GM12878 (cell line): ENCODE measurements at regions of chr17 and their contacts with region 1.

Region 1: DNA sequence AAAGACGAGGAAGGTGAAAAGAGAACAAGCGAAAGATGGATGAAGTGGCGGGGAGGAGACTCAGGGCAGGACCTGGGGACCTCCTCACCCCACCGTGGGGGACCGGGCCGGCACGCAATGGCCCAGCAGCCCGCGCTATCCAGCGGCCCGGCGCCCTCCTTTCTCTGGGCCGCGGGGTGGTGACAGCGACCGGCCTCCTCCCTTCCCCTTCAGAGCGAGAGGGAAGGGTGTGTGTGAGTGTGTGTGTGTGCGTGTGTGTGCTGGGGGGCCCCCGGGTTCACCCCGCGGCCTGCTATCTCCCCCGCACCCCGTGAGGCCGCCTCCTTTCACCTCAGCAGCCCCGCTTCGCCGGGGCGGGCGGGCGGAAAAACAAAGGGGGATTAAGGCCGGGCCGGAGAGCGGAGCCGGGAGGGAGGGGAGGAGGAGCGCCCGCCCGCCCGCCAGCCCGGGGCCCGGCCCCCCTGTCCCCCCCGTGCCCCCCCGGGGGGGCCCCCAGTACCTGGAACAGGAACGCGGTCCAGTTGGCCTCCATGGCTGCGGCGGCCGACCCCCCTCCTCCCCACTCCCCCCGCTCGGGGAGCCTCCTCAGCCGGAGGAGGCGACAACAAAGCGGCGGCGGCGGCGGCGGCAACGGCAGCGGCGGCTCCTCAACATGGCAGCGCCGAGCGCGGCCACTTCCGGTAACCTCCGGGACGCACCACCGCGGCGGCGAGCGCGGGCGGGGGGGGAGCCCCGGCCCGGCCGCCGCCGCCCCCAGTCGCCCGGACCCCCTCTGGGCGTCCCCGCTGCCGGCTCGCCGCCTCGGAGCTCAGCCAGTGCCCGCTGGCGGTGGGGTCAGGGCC is at the start of gene VEZF1:
- DNase-seq: no peak
- ATAC-seq: peak; percentile 73
- H3K4me3 ChIP-seq: peak within 1 kb of the TSS; percentile 87
- H3K27ac ChIP-seq: peak within 1 kb of the TSS; percentile 56
- H3K4me1 ChIP-seq: peaks cover 5% of the 10 kb centered on the region
- H3K27me3 ChIP-seq: no peaks in the 10 kb centered on the region
- CTCF ChIP-seq: no peak
- EP300 ChIP-seq: no peak
- POLR2A ChIP-seq: peak; percentile 13; the same call in 1 of the 2 replicates
- RAD21 ChIP-seq: no peak
- polyA plus RNA-seq, gene VEZF1: 9.5 to 11.7 TPM

Region 2: DNA sequence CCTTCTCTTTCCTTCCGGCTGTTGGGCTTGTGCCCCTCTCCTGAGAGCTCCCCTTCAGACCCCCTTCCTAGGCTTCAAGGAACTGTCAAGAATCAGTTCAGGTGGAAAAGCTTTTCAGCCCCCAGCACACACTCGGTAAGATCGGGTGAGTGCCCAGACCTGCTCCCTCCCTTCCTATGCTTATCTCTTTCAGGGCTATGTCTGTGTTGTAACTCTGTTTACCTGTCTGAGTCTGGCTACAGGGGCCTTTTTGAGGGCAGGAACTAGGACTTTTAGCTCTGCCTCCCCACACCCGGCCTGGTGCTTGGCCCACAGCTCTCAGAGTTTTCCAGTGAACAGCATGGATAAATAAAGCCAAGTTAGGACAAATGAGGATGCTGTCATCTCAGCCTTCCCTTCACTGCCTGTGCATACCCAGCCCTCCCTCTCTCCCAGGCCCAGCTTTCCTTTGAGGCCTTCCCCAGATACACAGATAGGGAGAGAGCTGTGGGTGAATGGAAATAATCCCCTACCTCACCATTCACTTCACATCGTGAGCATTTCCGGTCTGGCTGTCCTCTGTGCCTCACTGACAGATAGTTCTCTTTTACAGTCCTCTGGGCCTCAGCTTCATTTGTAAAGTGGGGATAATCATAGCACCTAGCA is 132.3 kb before region 1 on chr17:
- CTCF ChIA-PET with region 1: interaction called, 708 read pairs
- POLR2A ChIA-PET with region 1: interaction called, 10 read pairs
- RAD21 ChIA-PET with region 1: interaction called, 239 read pairs
- SMC1A ChIA-PET with region 1: interaction called, 341 read pairs
- in situ Hi-C with region 1: no loop called
- intact Hi-C with region 1: no loop called
- DNase-seq: no peak
- ATAC-seq: no peak
- H3K4me3 ChIP-seq: no peak overlapping the region
- H3K27ac ChIP-seq: no peak overlapping the region
- H3K4me1 ChIP-seq: no peaks in the 10 kb centered on the region
- H3K27me3 ChIP-seq: no peaks in the 10 kb centered on the region; a peak in 1 of 4 replicates
- CTCF ChIP-seq: no peak
- EP300 ChIP-seq: no peak
- POLR2A ChIP-seq: no peak
- RAD21 ChIP-seq: no peak

Region 3: GRCh38 chr17:57892146-57892828 is 95.5 kb before region 1 on chr17:
- CTCF ChIA-PET with region 1: interaction called, 89 read pairs
- POLR2A ChIA-PET with region 1: no interaction called
- RAD21 ChIA-PET with region 1: interaction called, 13 read pairs
- SMC1A ChIA-PET with region 1: interaction called, 27 read pairs
- in situ Hi-C with region 1: loop called (anchors 10 kb)
- intact Hi-C with region 1: no loop called
- DNase-seq: no peak
- ATAC-seq: peak; percentile 91
- H3K4me3 ChIP-seq: no peak overlapping the region
- H3K27ac ChIP-seq: no peak overlapping the region
- H3K4me1 ChIP-seq: peaks cover 19% of the 10 kb centered on the region
- H3K27me3 ChIP-seq: no peaks in the 10 kb centered on the region
- CTCF ChIP-seq: peak; percentile 91 to 99 (median 99)
- EP300 ChIP-seq: no peak
- POLR2A ChIP-seq: no peak
- RAD21 ChIP-seq: peak; percentile 88

Region 4: DNA sequence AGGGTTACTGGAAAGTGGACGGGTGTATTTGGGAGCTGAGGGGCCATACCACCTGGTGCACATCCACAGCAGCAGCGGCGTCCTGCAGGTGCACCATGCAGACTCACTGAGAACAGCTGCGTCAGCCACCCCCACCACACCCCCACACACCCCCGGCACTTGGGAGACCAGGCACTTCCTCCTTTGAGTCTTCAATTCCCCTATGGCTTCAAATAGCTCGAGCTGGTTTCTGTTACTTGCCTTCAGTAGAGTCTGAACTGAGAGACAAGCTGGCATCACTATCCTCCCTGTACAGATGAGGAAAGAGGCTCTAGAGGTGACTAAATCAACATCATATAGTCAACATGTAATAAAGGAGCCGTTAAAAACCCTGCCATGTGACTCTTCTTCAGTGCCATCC is 48.0 kb before region 1 on chr17:
- CTCF ChIA-PET with region 1: interaction called, 5 read pairs
- POLR2A ChIA-PET with region 1: interaction called, 11 read pairs
- RAD21 ChIA-PET with region 1: interaction called, 23 read pairs
- SMC1A ChIA-PET with region 1: interaction called, 114 read pairs
- in situ Hi-C with region 1: no loop called
- intact Hi-C with region 1: no loop called
- DNase-seq: peak; percentile 75
- ATAC-seq: peak; percentile 87
- H3K4me3 ChIP-seq: no peak overlapping the region; the same call in 1 of the 2 replicates
- H3K27ac ChIP-seq: no peak overlapping the region
- H3K4me1 ChIP-seq: peaks cover 45% of the 10 kb centered on the region
- H3K27me3 ChIP-seq: no peaks in the 10 kb centered on the region
- CTCF ChIP-seq: no peak
- EP300 ChIP-seq: peak; percentile 66; a peak in 2 of 4 replicates
- POLR2A ChIP-seq: no peak
- RAD21 ChIP-seq: no peak

Region 5: DNA sequence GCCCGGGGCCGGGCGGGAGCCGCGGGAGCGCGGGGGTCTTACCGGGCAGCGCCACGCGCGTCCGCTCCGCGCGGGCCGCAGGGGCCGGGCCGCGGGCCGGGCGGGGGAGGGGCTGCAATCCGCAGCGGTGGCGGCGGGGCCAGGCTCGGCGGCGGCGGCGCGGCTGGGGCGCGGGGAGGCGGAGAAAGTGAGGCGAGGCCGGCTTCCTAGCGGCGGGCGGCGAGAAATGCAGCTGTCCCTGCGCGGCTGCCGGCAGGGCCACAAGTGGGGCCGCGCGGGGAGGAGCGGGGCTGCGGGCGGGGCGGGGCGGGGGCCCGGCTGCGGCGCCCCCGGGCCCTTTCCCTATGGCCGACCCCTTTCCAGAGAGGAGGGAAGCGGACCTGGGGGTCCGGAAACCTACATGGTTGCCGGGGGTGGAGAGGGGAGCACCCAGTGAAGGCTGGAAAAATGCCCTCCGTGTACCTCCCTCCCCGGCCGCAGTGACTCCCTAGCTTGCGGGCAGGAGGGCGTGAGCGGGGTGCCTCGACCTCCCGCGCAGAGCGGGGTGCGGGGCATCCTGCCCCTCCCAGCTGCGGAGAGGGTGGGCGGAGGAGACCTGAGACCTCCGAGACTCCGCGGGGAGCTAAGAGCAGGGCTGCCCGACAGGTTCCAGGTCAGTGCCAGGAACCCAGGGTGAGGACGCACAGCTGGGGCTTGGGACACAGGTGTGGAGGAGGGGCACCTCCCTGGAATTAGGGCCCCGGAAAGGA is 32.4 kb before region 1 on chr17 and contains the start of gene CUEDC1:
- CTCF ChIA-PET with region 1: interaction called, 22 read pairs
- POLR2A ChIA-PET with region 1: interaction called, 5 read pairs
- RAD21 ChIA-PET with region 1: interaction called, 55 read pairs
- SMC1A ChIA-PET with region 1: interaction called, 114 read pairs
- in situ Hi-C with region 1: no loop called
- intact Hi-C with region 1: no loop called
- DNase-seq: no peak
- ATAC-seq: peak; percentile 79
- H3K4me3 ChIP-seq: peak within 1 kb of the TSS; percentile 74
- H3K27ac ChIP-seq: no peak within 1 kb of the TSS
- H3K4me1 ChIP-seq: peaks cover 23% of the 10 kb centered on the region
- H3K27me3 ChIP-seq: peaks cover 0 to 2% of the 10 kb centered on the region in 2 experiments; a peak in 2 of 4 replicates
- CTCF ChIP-seq: peak in 2 of 3 experiments; percentile 27 to 29; a peak in 2 of 6 replicates
- EP300 ChIP-seq: no peak
- POLR2A ChIP-seq: no peak
- RAD21 ChIP-seq: no peak
- polyA plus RNA-seq, gene CUEDC1: 0.24 to 0.80 TPM

Region 6: GRCh38 chr17:58006924-58007780 is 19.4 kb after region 1 on chr17 and contains the start of gene SRSF1:
- CTCF ChIA-PET with region 1: interaction called, 195 read pairs
- POLR2A ChIA-PET with region 1: interaction called, 10 read pairs
- RAD21 ChIA-PET with region 1: interaction called, 25 read pairs
- SMC1A ChIA-PET with region 1: interaction called, 72 read pairs
- in situ Hi-C with region 1: no loop called
- intact Hi-C with region 1: no loop called
- DNase-seq: peak; percentile 97
- ATAC-seq: peak; percentile 91
- H3K4me3 ChIP-seq: peak within 1 kb of the TSS; percentile 98
- H3K27ac ChIP-seq: peak within 1 kb of the TSS; percentile 96
- H3K4me1 ChIP-seq: peaks cover 8% of the 10 kb centered on the region; the same call in 1 of the 2 replicates
- H3K27me3 ChIP-seq: no peaks in the 10 kb centered on the region
- CTCF ChIP-seq: no peak
- EP300 ChIP-seq: peak in 1 of 2 experiments; percentile 62; a peak in 2 of 4 replicates
- POLR2A ChIP-seq: peak; percentile 99
- RAD21 ChIP-seq: no peak
- polyA plus RNA-seq, gene SRSF1: 101 to 104 TPM

Region 7: GRCh38 chr17:58028578-58028977 is 40.8 kb after region 1 on chr17:
- CTCF ChIA-PET with region 1: no interaction called
- POLR2A ChIA-PET with region 1: no interaction called
- RAD21 ChIA-PET with region 1: no interaction called
- SMC1A ChIA-PET with region 1: no interaction called
- in situ Hi-C with region 1: no loop called
- intact Hi-C with region 1: no loop called
- DNase-seq: no peak
- ATAC-seq: no peak
- H3K4me3 ChIP-seq: no peak overlapping the region
- H3K27ac ChIP-seq: no peak overlapping the region
- H3K4me1 ChIP-seq: no peaks in the 10 kb centered on the region
- H3K27me3 ChIP-seq: no peaks in the 10 kb centered on the region; a peak in 1 of 4 replicates
- CTCF ChIP-seq: no peak
- EP300 ChIP-seq: no peak
- POLR2A ChIP-seq: no peak
- RAD21 ChIP-seq: no peak

Region 8: GRCh38 chr17:58039975-58040374 is 52.2 kb after region 1 on chr17:
- CTCF ChIA-PET with region 1: no interaction called
- POLR2A ChIA-PET with region 1: no interaction called
- RAD21 ChIA-PET with region 1: no interaction called
- SMC1A ChIA-PET with region 1: no interaction called
- in situ Hi-C with region 1: no loop called
- intact Hi-C with region 1: no loop called
- DNase-seq: no peak
- ATAC-seq: no peak
- H3K4me3 ChIP-seq: no peak overlapping the region
- H3K27ac ChIP-seq: no peak overlapping the region
- H3K4me1 ChIP-seq: no peaks in the 10 kb centered on the region
- H3K27me3 ChIP-seq: 0 out of 4 replicates have a peak, but pooled peaks cover 0 to 2% of the 10 kb centered on the region in 2 experiments
- CTCF ChIP-seq: no peak
- EP300 ChIP-seq: no peak
- POLR2A ChIP-seq: no peak
- RAD21 ChIP-seq: no peak